ENCODE measurements at regions of chr12 and their contacts with region 1.

Region 1: GRCh38 chr12:52221912-52222457 is 11.1 kb upstream of the KRT7 start:
- DNase-seq: peak; percentile 58
- H3K4me3 Mint-ChIP-seq: no peak overlapping the region
- H3K27ac Mint-ChIP-seq: no peak overlapping the region
- H3K4me1 Mint-ChIP-seq: peaks cover 4% of the 10 kb centered on the region
- H3K27me3 Mint-ChIP-seq: peaks cover 43% of the 10 kb centered on the region

Region 2: DNA sequence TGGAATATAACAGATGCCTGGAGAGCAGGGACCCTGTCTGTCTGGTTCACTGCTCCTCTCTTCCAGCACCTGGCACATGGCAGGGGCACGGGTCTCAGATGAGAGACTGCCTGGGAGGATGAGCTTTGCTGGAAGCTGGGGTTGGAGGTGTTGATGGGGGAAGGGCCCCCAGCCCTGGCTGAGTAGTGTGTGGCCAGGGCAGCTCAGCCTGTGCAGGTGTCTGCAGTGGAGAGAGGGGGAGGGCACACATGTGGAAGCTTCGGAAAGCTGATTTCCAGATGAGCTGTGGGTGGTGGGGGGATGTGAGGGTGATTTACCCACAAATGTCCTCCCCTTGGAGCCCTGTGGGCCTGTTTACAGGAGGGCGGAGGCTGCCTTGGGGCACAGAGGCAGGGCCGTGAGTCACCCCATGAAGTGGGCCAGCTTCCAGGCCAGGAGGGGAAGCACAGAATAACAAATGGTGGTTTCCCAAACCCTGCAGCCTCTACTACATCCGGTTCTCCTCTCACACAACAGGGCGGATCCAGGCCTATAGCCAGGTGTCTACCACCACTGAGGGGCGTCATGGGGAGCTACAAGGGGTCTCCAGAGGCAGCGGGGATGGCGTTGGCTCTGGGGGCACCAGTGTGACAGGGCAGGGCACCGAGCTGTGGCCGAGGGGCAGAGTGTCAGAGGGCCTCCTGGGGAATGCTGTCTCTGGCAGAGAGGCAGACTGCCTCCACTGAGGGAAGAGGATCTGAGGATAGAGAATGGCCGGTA is 22.1 kb after region 1 on chr12:
- intact Hi-C with region 1: loop called (anchors 1 kb)
- DNase-seq: peak; percentile 56
- H3K4me3 Mint-ChIP-seq: peak overlapping the region; percentile 76
- H3K27ac Mint-ChIP-seq: peak overlapping the region; percentile 93
- H3K4me1 Mint-ChIP-seq: peaks cover 45% of the 10 kb centered on the region
- H3K27me3 Mint-ChIP-seq: peaks cover 2% of the 10 kb centered on the region

Region 3: DNA sequence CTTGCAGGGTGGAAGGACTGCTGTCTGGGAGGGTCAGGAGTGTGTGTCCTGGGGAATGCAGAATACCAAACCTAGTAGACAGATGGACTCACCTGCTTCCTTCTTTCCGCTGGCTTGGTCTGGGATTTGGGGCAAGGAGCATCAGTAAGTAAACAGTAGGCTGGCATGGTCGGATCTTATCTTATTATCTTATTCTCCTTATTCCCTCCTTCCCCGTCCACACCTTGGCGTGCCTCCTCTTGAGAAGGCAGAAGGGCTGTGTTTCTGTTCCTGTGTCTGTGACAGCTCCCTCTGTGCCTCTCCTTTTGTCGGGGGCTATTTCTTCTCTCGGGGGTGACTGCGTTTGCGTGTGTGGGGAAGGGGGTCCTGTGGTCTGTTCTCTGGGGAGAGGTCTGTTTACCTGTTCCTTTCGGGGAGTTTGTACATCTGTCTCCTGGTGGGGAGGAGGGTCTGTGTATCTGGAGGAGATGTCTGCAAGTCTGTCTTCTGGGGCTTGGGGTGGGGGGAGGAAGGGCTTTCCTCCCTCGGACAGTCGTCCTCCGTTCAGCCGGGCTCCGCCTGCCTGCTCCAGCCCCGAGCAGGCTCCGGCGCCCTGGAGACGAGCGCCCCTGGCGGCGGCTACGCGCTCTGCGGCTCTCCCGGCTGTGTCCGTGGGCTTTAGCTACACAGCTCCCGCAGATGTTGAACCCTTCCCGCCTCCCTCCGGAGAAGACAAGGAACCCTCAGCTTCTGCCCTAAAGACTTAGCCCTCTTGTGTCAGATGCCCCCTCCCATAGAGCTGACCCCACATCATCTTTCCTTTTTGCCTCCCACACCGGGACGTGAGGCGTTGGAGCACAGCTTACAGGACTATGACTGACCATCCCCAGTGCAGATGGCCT is 56.8 kb after region 1 on chr12:
- intact Hi-C with region 1: loop called (anchors 5 kb)
- DNase-seq: peak; percentile 63
- H3K4me3 Mint-ChIP-seq: no peak overlapping the region
- H3K27ac Mint-ChIP-seq: no peak overlapping the region
- H3K4me1 Mint-ChIP-seq: peaks cover 3% of the 10 kb centered on the region
- H3K27me3 Mint-ChIP-seq: peaks cover 35% of the 10 kb centered on the region

Measured in activated T-helper 2 cell treated with anti-CD3 and anti-CD28 coated beads, Interferon-gamma antibody, Interleukin-2, Interleukin-4, amounts not matched to agents 10 μg/mL and 5 μg/mL and 100 μg/mL, durations not matched to agents 14 hours and 24 hours and 36 hours (primary cell).